ENCODE measurements at regions of chr2 and their contacts with region 1.

Region 1: DNA sequence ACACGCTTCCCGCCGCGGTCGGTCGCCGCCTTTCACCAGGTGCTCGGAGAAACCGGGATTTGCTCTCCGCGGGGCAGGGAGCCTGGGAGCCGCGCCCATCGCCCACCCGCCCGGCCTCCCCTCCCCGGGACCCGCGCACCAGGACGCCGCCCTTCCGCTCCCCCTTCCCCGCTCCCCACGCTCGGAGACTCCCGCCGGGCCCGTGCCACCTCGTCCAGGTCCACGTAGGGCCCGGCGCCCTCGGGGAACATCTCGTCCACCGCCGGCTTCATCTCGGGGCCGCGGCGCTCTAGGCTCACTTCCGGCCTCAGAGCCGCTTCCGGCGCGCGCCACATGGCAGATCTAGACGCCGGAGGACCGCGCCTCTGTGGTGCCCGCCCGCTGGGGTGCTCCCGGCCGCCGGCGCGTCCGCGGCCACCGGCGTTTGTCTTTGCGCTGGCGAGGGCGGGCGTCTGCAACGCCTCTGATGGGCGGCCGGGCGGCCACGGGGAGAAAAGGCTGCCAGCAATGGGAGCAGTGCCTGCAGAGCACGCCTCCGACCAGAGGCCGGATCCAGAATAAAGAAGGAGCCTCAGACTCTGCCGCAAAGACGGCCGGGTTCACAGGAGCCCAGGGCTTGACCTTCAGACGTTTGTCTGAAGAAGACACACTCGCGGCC is at the start of gene COPS9:
- DNase-seq: peak; percentile 85
- H3K4me3 Mint-ChIP-seq: peak within 1 kb of the TSS; percentile 92
- H3K27ac Mint-ChIP-seq: peak within 1 kb of the TSS; percentile 84
- H3K4me1 Mint-ChIP-seq: peaks cover 25% of the 10 kb centered on the region
- H3K27me3 Mint-ChIP-seq: peaks cover 6% of the 10 kb centered on the region
- total RNA-seq, gene COPS9: 127 and 132 TPM in 2 replicates

Region 2: DNA sequence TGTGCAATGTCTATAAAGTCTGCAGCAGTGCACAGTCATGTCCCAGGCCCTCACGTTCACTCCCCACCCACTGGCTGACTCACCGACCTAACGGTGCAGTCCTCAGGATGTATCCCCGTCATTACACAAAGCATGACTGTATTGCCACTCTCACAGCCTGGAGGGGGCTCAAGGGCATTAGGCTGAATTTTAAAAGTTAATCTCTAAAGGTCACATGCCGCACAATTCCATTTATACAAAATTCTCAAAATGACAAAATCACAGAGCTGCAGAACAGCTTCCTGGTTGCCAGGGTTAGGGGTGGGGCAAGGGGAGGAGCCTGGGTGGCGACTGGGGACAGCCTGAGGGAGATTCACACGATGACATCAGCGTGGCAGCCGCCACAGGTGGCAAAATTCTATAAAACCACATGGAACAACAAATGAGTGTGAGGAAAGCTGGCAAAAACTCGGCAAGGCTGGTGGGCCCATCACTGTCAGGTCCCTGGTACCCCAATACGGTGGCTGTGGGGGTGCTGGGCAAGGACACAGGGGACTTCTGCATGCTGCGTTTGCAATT is 208.6 kb before region 1 on chr2:
- intact Hi-C with region 1: loop called (anchors 5 kb)
- DNase-seq: peak; percentile 48
- H3K4me3 Mint-ChIP-seq: peak overlapping the region; percentile 53
- H3K27ac Mint-ChIP-seq: peak overlapping the region; percentile 61
- H3K4me1 Mint-ChIP-seq: peaks cover 38% of the 10 kb centered on the region
- H3K27me3 Mint-ChIP-seq: peaks cover 11% of the 10 kb centered on the region

Region 3: DNA sequence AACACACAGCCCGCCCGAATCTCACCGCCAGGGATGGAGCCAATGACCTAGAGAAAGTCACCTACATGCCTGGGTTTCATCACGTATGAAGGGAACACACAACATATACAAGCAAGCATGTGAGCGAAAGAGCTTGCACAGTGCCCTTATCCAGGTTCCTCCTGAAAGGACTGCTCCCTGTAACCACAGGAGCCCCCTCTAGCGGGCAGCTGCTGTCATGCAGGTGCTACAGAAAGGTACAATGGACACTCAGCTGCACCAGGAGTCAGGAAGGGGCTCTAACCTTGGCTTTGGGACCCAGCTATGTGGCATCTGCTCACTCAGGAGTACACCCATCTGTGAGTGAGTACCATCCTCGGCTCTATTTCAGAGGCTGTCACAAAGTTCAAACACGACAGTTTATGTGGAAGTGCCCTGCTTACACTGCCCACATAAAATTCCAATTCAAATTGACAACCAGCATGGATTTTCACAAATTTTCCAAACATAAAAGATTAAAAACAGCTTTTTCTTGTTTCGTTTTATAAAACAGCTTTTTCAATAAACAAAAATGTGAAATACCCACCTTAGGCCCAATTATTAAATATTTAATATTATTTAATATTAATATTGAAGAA is 114.5 kb before region 1 on chr2:
- intact Hi-C with region 1: loop called (anchors 1 kb)
- DNase-seq: peak; percentile 48
- H3K4me3 Mint-ChIP-seq: no peak overlapping the region
- H3K27ac Mint-ChIP-seq: no peak overlapping the region
- H3K4me1 Mint-ChIP-seq: peaks cover 21% of the 10 kb centered on the region
- H3K27me3 Mint-ChIP-seq: no peaks in the 10 kb centered on the region

Region 4: GRCh38 chr2:240121675-240122074 is 14.5 kb before region 1 on chr2:
- intact Hi-C with region 1: loop called (anchors 1 kb)
- DNase-seq: no peak
- H3K4me3 Mint-ChIP-seq: no peak overlapping the region
- H3K27ac Mint-ChIP-seq: no peak overlapping the region
- H3K4me1 Mint-ChIP-seq: peaks cover 6% of the 10 kb centered on the region
- H3K27me3 Mint-ChIP-seq: peaks cover 10% of the 10 kb centered on the region

Region 5: GRCh38 chr2:240205348-240205747 is 69.2 kb after region 1 on chr2:
- intact Hi-C with region 1: no loop called
- DNase-seq: no peak
- H3K4me3 Mint-ChIP-seq: no peak overlapping the region
- H3K27ac Mint-ChIP-seq: no peak overlapping the region
- H3K4me1 Mint-ChIP-seq: peaks cover 9% of the 10 kb centered on the region
- H3K27me3 Mint-ChIP-seq: peaks cover 4% of the 10 kb centered on the region